Left ventricle myocardium superior (tissue), 1 donor: ENCODE measurements at regions of chr16 and their contacts with region 1.

Region 1: DNA sequence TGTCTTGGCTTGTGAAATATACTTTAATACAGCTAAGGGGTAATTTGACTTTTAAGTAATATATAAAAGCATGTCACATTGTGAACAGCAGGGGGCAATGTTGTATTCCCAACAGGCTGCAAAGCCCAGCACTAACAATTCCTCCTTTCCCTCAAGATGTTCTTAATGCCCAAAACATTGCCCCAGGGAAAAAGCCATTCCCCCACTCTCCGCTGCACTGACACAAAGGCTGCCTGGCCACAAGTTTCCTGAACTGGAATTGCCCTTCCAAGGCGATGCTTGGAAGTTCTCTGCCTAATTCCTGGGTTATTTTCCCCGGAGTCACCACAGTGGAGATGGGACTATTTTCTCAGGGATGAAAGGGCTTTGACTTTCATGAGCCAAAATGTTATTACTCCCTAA is 27.2 kb downstream of the CLEC16A start:
- DNase-seq: no peak
- ATAC-seq: peak; percentile 73

Region 2: DNA sequence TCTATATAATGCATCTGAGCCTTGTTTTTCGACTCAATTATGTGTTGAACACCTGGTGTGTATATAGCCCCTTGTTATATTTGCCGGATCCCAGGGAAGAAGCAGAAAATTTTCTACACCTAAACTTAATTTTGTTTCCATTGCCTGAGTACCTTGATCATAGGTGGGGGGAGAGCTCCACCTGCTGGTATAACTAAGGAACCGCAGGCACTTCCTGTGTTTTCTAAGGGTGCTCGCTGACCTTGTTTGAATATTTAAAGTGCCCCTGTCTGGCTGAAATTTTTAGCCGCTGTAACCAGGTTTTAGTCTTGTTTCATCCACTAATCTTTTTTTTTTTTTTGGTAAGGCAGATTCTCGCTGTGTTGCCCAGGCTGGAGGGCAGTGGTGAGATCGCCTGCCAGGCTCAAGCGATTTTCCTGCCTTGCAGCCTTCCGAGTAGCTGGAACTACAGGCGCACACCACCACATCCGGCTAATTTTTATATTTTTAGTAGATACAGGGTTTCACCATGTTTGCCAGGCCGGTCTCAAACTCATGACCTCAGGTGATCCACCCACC is 234.4 kb before region 1 on chr16:
- intact Hi-C with region 1: no loop called
- DNase-seq: no peak
- ATAC-seq: peak; percentile 60

Region 3: GRCh38 chr16:10906914-10907756 is 64.4 kb before region 1 on chr16:
- intact Hi-C with region 1: no loop called
- DNase-seq: peak; percentile 82
- ATAC-seq: peak; percentile 90

Region 4: GRCh38 chr16:11232852-11233726 is 261.5 kb after region 1 on chr16:
- intact Hi-C with region 1: no loop called
- DNase-seq: peak; percentile 65
- ATAC-seq: peak; percentile 65

Region 5: GRCh38 chr16:11255737-11256660 is 284.4 kb after region 1 on chr16 and contains the start of gene SOCS1:
- intact Hi-C with region 1: loop called (anchors 5 kb)
- DNase-seq: peak; percentile 92
- ATAC-seq: peak; percentile 80
- total RNA-seq, gene SOCS1: 3.8 TPM

Region 6: DNA sequence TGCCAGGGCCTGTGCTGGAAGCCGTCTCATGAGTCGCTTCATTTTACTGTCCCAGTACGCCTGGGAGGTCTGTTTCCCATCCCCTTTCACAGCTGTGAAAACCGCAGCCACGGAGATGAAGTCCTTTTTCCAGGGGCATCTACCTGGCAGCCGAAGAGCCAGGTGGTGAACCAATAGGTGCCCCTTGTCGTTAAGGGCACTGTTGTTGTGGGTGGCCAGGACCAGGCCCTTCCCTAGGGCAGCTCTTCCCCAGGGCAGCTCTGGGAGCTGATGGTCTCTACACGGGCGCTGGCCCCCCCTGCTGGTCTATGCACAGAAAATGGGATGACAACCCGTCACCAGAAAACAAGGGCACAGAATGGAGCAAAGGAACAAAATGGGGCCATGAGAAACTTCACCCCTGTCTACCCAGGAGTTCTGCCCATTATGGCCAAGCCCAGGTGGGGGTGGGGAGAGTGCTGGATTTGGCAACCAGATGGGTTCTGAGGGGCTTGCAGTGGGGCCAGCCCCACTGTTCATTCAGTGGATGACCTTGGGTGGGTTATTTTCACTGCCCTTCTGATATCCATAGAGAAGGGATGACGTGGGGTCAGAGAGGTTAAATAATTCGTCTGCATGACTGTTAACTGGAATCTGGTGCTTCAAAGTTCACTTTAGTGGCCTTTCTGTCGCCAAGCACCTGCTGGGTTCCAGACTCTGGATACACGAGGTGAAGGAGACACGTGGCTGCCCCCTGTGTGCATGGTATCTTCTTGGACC is 385.2 kb after region 1 on chr16:
- intact Hi-C with region 1: loop called (anchors 10 kb)
- DNase-seq: peak; percentile 82
- ATAC-seq: peak; percentile 67